ENCODE measurements at regions of chr12 and their contacts with region 1.

Region 1: DNA sequence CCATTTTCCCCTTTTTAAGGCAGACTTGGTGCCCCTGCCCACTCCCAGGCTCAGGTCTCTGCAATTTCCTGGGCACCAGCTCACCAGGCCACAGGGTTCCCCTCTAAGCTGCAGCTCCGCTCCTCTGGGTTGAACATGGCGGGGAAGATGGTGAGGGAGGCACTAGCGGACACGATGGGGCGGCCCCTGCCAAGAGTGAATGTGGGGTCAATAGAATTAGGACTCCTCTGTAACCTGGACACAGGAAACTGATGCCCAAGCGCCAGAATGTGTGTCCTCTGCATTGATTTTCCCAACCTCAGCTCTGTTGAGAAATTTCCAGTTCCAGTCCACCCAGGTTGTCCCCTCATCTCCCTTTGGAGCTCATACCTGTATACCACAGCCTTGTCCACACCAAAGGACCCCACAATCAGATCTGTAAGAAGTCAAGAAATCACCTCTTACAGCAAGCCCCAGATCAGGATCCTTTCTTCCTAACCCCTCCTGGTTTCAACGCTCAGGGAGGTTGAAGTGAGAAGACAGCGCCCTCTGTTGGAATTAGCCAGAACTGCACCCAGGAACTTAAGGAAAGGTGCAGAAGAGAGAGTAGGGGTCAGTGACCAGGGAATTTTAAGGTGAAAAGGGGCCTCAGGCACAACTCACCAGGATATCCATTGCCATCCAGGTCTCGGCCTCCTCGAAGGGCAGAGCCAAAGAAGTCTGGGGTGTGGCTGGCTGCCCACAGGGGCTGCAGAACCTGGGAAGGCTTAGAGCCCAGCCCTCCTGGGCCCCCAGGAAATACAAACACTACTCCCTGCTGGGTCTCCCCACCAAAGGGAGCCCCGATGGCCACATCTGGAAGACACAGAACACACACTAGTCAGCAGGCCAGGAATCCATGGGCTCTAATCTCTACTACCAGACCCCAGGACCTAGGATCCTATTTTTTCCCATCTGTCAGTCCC is 14.7 kb downstream of the ITGA5 start:
- DNase-seq: peak; percentile 58 to 73 (median 64)
- ATAC-seq: peak; percentile 32
- H3K4me3 ChIP-seq: no peak overlapping the region
- H3K27ac ChIP-seq: no peak overlapping the region
- H3K4me1 ChIP-seq: no peaks in the 10 kb centered on the region
- H3K27me3 ChIP-seq: no peaks in the 10 kb centered on the region
- CTCF ChIP-seq: peak; percentile 68 to 93 (median 85)
- POLR2A ChIP-seq: no peak

Region 2: GRCh38 chr12:54439521-54440255 is 35.4 kb after region 1 on chr12:
- intact Hi-C with region 1: loop called (anchors 5 kb)
- DNase-seq: no peak
- ATAC-seq: peak; percentile 88
- H3K4me3 ChIP-seq: no peak overlapping the region
- H3K27ac ChIP-seq: no peak overlapping the region
- H3K4me1 ChIP-seq: peaks cover 7% of the 10 kb centered on the region
- H3K27me3 ChIP-seq: no peaks in the 10 kb centered on the region
- CTCF ChIP-seq: peak; percentile 57 to 91 (median 86)
- POLR2A ChIP-seq: no peak

Region 3: DNA sequence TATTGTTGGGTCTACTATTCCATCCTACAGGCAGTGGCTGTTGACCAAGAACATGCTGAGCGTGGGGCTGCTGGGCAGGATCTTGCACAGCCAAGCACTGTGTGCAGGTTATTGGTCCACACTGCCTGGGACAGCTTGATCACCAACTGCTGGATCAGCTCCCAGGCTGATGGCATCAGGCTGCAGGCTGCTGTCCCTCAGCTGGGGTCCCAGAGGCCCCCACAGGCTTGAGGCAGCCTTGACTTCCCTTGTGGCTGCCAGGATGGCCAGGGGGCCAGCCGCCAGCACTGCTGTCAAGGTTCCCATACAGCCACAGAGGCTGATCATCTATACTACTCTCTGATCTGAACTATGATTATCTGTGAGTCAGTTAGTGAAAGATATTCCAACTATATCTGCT is 1177.7 kb after region 1 on chr12:
- intact Hi-C with region 1: no loop called
- DNase-seq: no peak
- ATAC-seq: no peak
- H3K4me3 ChIP-seq: no peak overlapping the region
- H3K27ac ChIP-seq: no peak overlapping the region
- H3K4me1 ChIP-seq: no peaks in the 10 kb centered on the region
- H3K27me3 ChIP-seq: no peaks in the 10 kb centered on the region
- CTCF ChIP-seq: no peak
- POLR2A ChIP-seq: no peak

Measured in body of pancreas (tissue), 4 donors.